ENCODE measurements at regions of chr10 and their contacts with region 1.

Region 1: DNA sequence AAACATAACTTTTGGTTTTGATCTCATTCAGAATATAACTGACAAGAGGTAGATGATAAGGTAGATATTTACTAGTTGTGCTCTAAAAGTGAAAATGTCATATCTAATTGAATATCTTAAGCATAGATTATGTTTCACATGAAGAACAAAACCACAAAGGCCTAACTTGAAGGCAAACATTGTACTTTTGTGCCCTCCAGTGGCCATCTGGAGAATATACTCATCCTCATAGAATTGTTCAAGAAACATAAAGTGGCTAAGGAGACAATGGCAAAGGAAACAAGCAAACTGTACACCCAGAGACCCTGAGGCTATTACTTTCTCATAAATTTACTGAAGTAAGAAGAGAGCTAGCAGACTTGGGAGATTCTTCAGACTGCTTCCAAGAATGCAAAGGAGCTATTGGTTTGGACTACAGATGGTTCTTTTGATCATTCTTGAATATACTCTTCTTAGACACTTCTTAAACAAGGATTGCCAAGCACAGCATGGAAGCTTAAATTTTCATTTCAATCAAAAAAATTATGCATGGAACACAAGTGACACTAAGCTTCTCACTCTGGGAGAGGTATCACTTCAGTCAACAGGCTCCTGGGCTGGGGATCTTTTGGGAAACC is 98.2 kb upstream of the DKK1 start:
- DNase-seq: no peak
- H3K4me3 ChIP-seq: no peak overlapping the region
- H3K27ac ChIP-seq: no peak overlapping the region
- H3K4me1 ChIP-seq: peaks cover 0 to 7% (median 3%) of the 10 kb centered on the region in 4 donors
- H3K27me3 ChIP-seq: no peaks in the 10 kb centered on the region
- CTCF ChIP-seq: peak; percentile 41 to 82 (median 68)
- EP300 ChIP-seq: no peak
- POLR2A ChIP-seq: no peak

Region 2: GRCh38 chr10:51001587-51001986 is 1214.3 kb before region 1 on chr10:
- intact Hi-C with region 1: loop called (anchors 2 kb)
- DNase-seq: no peak
- H3K4me3 ChIP-seq: no peak overlapping the region
- H3K27ac ChIP-seq: no peak overlapping the region
- H3K4me1 ChIP-seq: no peaks in the 10 kb centered on the region
- H3K27me3 ChIP-seq: no peaks in the 10 kb centered on the region
- CTCF ChIP-seq: peak; percentile 34 to 71 (median 44)
- EP300 ChIP-seq: no peak
- POLR2A ChIP-seq: no peak

Region 3: GRCh38 chr10:51063659-51064535 is 1152.0 kb before region 1 on chr10:
- intact Hi-C with region 1: loop called (anchors 5 kb)
- DNase-seq: no peak
- H3K4me3 ChIP-seq: no peak overlapping the region
- H3K27ac ChIP-seq: no peak overlapping the region
- H3K4me1 ChIP-seq: peaks cover 0 to 13% (median 0%) of the 10 kb centered on the region in 4 donors
- H3K27me3 ChIP-seq: no peaks in the 10 kb centered on the region
- CTCF ChIP-seq: peak; percentile 33 to 63 (median 40)
- EP300 ChIP-seq: no peak
- POLR2A ChIP-seq: no peak

Region 4: DNA sequence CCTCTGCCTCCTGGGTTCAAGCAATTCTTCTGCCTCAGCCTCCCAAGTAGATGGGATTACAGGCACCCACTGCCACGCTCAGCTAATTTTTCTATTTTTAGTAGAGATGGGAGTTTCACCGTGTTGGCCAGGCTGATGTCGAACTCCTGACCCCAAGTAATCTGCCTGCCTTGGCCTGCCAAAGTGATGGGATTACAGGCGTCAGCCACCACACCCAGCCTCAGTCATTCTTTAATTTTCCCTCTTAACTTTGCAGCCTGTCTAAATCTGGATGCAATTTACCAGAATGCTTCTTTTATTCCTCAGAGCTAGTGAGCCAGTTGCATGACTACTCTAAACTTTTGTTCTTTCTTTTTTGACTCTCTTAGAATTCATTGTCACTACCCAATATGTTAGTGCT is 425.9 kb before region 1 on chr10:
- intact Hi-C with region 1: loop called (anchors 10 kb)
- DNase-seq: no peak
- H3K4me3 ChIP-seq: no peak overlapping the region
- H3K27ac ChIP-seq: no peak overlapping the region
- H3K4me1 ChIP-seq: peaks cover 0 to 14% (median 12%) of the 10 kb centered on the region in 4 donors
- H3K27me3 ChIP-seq: no peaks in the 10 kb centered on the region
- CTCF ChIP-seq: no peak
- EP300 ChIP-seq: no peak
- POLR2A ChIP-seq: no peak

Region 5: GRCh38 chr10:52283174-52283573 is 67.3 kb after region 1 on chr10:
- intact Hi-C with region 1: no loop called
- DNase-seq: no peak
- H3K4me3 ChIP-seq: no peak overlapping the region
- H3K27ac ChIP-seq: no peak overlapping the region
- H3K4me1 ChIP-seq: peaks cover 0 to 9% (median 3%) of the 10 kb centered on the region in 4 donors
- H3K27me3 ChIP-seq: no peaks in the 10 kb centered on the region
- CTCF ChIP-seq: no peak
- EP300 ChIP-seq: no peak
- POLR2A ChIP-seq: no peak

Measured in sigmoid colon (tissue), 7 donors.